ENCODE measurements at regions of chr18 and their contacts with region 1.

Region 1: DNA sequence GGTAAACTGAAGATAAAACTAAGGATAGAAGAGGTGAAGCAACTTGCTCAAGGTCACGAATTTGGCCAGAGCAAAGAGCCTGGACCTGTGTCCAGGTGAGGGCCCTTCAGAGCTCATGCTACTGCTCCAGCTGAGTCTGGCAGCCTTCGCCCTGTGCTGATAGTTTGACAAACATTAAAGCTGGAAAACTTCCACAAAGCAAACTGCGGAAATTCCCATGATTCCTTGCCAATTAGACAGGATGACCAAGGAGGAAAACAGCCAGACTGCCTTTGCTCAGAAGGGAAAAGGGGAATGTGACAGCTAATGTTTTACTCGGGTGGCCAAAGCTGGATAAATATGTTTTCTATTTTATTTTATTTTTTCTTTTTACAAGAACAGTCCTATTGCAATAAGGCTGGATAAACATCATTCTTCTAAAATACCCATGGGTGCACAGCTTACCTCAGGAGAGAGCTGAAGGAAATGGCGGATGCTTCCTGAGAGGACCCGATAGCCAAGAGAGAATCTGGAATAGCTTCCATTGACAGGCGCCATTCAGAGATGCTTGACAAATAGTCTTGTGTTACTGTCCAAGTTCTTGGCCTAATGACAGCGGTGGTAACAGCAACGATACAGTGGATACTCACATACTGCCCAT is 5.3 kb upstream of the CTAGE1 start:
- DNase-seq: no peak
- H3K4me3 ChIP-seq: no peak overlapping the region
- H3K4me3 Mint-ChIP-seq: no peak overlapping the region
- H3K27ac ChIP-seq: no peak overlapping the region
- H3K27ac Mint-ChIP-seq: no peak overlapping the region
- H3K4me1 ChIP-seq: no peaks in the 10 kb centered on the region
- H3K4me1 Mint-ChIP-seq: no peaks in the 10 kb centered on the region
- H3K27me3 ChIP-seq: no peaks in the 10 kb centered on the region
- H3K27me3 Mint-ChIP-seq: no peaks in the 10 kb centered on the region

Region 2: GRCh38 chr18:22378672-22379282 is 44.3 kb before region 1 on chr18:
- CTCF ChIA-PET with region 1: no interaction called
- POLR2A ChIA-PET with region 1: no interaction called
- intact Hi-C with region 1: loop called (anchors 10 kb)
- DNase-seq: peak in 3 of 5 donors; percentile 3 to 8 (median 7)
- H3K4me3 ChIP-seq: no peak overlapping the region
- H3K4me3 Mint-ChIP-seq: no peak overlapping the region
- H3K27ac ChIP-seq: no peak overlapping the region
- H3K27ac Mint-ChIP-seq: no peak overlapping the region
- H3K4me1 ChIP-seq: no peaks in the 10 kb centered on the region
- H3K4me1 Mint-ChIP-seq: no peaks in the 10 kb centered on the region
- H3K27me3 ChIP-seq: no peaks in the 10 kb centered on the region
- H3K27me3 Mint-ChIP-seq: no peaks in the 10 kb centered on the region

Measured in CD4-positive, alpha-beta memory T cell (primary cell).